GM13976 (cell line): ENCODE measurements at regions of chr7 and their contacts with region 1.

Region 1: DNA sequence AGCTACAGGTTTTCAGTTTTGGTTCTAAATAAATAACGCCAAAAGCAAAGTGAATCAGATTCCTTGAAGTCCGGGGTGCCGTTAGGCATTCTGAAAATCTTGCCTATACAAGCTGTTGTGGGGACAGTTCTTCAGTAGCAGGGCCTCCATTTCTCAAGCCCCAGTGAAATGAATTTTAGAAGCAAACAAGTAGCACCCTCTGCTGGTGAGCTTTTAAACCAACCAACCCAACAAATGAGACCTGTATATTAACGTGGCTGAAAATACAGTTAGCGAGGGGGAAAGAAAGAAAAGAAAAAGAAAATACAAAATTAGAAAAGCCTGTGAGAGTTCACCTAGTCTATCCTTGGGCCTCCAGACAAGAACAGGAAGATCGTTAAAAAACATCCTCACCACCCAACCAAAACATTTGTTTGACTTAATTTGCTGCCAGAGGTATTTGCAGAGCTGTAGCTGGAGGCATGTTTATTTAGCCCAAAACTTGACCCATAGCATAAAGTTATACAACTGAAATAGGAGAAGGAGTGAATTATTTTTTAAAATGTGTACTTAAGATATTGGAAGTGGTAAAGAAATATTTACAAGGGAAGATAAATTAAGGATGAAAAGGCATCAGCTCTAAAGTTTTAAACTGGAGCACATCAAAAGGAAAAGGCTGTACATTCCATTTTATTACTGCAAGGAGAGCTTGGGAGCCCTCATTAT is 98.9 kb downstream of the DYNC1I1 start:
- DNase-seq: peak; percentile 56
- CTCF ChIP-seq: peak; percentile 65

Region 2: DNA sequence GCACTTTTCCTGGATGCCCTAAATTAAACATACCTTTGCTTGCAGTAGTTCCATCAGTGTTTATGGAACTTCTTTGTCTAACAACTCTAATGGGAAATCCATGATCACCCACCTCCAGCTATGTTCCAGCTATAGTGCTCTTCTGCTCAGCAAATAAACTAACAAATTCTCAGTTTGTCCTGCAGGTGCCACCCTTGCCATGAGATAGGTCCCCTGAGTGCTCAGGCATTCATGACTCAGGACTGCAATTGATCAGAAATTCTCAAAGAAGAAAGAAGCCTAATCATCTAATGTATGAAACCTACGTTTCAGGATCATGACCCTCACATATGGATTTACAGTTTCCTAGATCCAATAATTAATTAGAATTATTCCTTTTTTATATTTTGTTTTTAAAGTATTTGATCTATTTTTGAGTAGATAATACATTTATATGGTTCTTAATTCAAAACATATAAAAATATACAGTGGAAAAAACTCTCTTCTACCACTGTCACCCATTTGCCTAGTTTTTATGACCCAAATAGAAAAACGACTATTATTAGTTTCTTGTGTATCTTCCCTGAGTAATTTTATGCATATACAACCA is 147.5 kb before region 1 on chr7:
- in situ Hi-C with region 1: loop called (anchors 10 kb)
- DNase-seq: peak; percentile 28
- CTCF ChIP-seq: peak; percentile 22